Calu3 (cell line): ENCODE measurements at regions of chr4 and their contacts with region 1.

Region 1: DNA sequence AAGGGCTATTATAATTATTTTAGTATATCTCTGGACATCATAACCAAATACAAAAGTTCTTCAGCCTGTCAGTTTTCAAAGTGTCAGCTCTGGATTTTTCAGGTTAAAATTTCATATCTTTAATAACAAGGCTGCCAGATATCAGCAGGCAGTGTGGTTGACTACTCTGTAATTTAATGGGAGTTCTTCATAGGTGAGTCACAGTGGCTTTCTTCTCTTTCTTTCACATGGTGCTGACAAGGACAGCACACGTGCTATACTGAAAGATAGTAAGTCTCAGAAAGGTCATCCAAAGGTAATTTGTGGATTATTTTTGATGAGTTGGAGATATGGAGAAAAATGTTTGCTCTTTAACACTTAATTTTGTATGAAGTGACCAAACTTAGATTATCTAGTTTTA is 43.2 kb downstream of the GALNT7 start:
- DNase-seq: no peak
- H3K4me3 Mint-ChIP-seq: no peak overlapping the region
- H3K27ac Mint-ChIP-seq: peak overlapping the region; percentile 87
- H3K4me1 Mint-ChIP-seq: peaks cover 20% of the 10 kb centered on the region
- H3K27me3 Mint-ChIP-seq: no peaks in the 10 kb centered on the region
- CTCF ChIP-seq: no peak

Region 2: GRCh38 chr4:173252024-173252935 is 40.4 kb after region 1 on chr4:
- CTCF ChIA-PET with region 1: no interaction called
- intact Hi-C with region 1: loop called (anchors 5 kb)
- DNase-seq: peak; percentile 76
- H3K4me3 Mint-ChIP-seq: no peak overlapping the region
- H3K27ac Mint-ChIP-seq: peak overlapping the region; percentile 40
- H3K4me1 Mint-ChIP-seq: peaks cover 27% of the 10 kb centered on the region
- H3K27me3 Mint-ChIP-seq: no peaks in the 10 kb centered on the region
- CTCF ChIP-seq: no peak